Tibial artery (tissue), 4 donors: ENCODE measurements at regions of chr14 and their contacts with region 1.

Region 1: DNA sequence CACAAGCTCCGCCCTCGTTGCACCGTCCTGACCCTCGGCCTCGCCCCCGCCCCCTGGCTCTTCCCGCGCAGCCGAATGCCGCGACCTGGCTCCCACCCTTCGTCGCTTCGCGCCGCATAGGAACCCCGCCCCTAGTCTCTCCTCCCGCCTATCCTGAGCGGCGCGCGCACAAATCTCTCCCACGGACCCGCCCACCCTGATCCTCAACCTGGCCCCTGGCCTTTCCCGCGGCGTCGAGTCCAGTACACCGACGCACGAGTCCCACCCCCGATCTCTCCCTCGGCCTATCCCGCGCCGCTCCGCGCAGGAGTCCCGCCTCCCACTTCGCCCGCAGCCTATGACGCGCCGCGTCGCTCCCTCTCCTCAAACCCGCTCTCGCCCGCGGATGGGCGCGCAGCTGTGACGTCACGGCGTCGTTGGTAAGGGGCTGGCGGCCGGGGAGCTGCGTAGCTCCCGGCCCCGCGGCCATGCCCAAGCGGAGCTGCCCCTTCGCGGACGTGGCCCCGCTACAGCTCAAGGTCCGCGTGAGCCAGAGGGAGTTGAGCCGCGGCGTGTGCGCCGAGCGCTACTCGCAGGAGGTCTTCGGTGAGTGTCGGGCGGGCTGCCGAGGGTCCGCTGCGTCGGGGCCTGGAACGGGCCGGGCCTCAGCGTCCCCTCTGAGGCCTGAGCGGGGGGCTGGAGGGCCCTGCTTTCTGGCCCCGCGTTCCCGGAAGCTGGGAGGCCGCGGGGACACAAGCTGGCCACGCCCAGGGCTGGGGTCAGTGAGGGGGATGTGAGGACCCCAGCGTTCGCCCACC is at the start of gene SIVA1:
- DNase-seq: peak; percentile 99 to 100
- H3K4me3 ChIP-seq: peak within 1 kb of the TSS; percentile 80 to 89
- H3K27ac ChIP-seq: peak within 1 kb of the TSS; percentile 97 to 98
- H3K4me1 ChIP-seq: peaks cover 0 to 69% (median 47%) of the 10 kb centered on the region in 4 donors
- H3K27me3 ChIP-seq: no peaks in the 10 kb centered on the region
- CTCF ChIP-seq: peak in 1 of 2 experiments; percentile 9

Region 2: DNA sequence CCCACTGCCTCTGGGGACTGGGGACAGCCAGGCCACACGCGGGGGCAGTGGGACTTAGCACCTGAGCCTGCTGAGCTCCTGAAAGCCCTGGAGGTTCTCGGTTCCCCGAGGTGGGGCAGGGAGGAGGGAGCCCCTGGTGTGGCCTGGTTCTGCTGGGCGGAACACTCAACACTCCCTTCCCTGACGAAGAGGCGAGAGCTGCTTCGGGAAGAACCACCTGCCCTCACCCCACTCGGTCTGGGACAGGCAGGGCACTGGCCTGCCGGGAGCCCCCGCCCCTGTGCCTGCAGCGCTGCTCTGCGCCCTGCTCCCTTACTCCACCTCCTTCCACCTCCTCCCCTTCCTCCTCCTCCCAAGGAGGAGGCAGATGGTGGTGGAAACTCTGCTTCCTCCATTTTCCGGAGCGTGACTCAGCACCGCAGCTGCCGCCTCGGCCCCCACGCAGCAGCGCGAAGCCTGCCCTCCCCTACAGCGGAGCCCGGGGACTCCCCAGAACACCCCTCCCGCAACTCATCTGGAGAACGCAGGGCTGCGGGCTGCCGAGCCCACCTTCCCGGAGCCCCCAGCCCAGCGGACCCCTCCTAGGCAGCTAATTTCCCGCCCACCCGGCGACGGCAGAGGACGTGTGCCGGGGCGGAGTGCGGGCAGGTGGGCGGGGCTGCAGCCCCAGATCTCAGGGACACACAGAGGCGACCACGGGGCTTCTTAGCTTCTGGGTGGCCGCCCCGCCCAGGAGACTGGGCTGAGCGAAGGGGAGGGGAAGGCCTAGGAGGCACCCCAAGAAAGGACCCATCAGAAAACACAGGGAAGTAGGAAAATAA is 75.2 kb before region 1 on chr14:
- intact Hi-C with region 1: loop called (anchors 2 kb)
- DNase-seq: peak; percentile 82 to 90
- H3K4me3 ChIP-seq: peak overlapping the region; percentile 51 to 63
- H3K27ac ChIP-seq: peak overlapping the region; percentile 87 to 91
- H3K4me1 ChIP-seq: peaks cover 0 to 60% (median 56%) of the 10 kb centered on the region in 4 donors
- H3K27me3 ChIP-seq: no peaks in the 10 kb centered on the region
- CTCF ChIP-seq: no peak

Region 3: DNA sequence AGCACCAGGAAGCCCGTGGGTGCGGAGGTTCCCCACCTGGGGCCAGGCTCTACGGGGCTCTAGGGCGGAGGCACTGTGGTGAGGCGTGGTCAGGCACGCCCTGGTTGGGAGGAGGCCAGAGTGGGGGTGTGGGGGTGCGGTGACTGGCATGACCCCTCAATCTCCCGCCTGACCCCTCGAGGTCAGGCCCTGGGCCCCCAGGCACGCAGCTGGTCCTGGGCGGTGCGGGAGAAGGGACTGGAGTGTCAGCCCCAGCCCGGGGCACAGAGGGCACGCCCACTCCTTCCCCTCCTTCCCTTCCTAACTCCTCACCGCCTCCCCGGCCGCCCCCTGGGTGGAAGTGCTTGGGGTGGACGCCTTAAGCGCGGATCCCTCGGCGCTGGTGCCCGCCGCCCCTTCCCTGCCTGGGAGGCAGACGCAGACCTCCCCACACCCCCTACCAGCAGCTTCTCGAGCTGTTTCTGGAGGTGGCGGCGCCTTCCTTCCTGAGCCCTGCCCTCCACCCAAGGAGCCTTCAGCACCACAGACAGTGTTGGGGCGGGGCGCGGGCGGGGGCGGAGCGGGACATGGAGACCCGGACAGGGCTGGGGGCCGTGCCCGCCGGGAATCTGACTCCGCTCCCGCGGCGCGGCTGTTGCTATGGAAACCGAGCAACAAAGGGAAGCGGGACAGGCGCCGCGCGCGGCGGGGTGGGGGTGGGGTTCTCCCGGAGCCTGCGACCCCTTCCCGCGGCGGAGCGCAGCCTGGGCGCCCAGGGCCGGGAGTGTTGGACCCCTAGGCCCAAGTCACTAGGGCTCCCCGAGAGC is 720.9 kb after region 1 on chr14:
- intact Hi-C with region 1: loop called (anchors 10 kb)
- DNase-seq: peak; percentile 93 to 98
- H3K4me3 ChIP-seq: peak overlapping the region; percentile 76 to 88
- H3K27ac ChIP-seq: peak overlapping the region; percentile 97 to 98
- H3K4me1 ChIP-seq: peaks cover 15 to 84% (median 69%) of the 10 kb centered on the region in 4 donors
- H3K27me3 ChIP-seq: no peaks in the 10 kb centered on the region
- CTCF ChIP-seq: no peak